IMR-90 (cell line): ENCODE measurements at regions of chr7 and their contacts with region 1.

Region 1: GRCh38 chr7:26192485-26193087 is 8.0 kb downstream of the HNRNPA2B1 start:
- DNase-seq: no peak
- ATAC-seq: no peak
- H3K4me3 ChIP-seq: no peak overlapping the region
- H3K27ac ChIP-seq: no peak overlapping the region
- H3K4me1 ChIP-seq: peaks cover 5% of the 10 kb centered on the region
- H3K27me3 ChIP-seq: no peaks in the 10 kb centered on the region
- CTCF ChIP-seq: no peak
- POLR2A ChIP-seq: no peak
- RAD21 ChIP-seq: no peak

Region 2: GRCh38 chr7:24732646-24733413 is 1459.8 kb before region 1 on chr7:
- CTCF ChIA-PET with region 1: no interaction called
- POLR2A ChIA-PET with region 1: interaction called, 16 read pairs
- dilution Hi-C with region 1: no loop called
- in situ Hi-C with region 1: no loop called
- intact Hi-C with region 1: no loop called
- DNase-seq: peak; percentile 92
- ATAC-seq: peak; percentile 81
- H3K4me3 ChIP-seq: no peak overlapping the region
- H3K27ac ChIP-seq: peak overlapping the region; percentile 54; the same call in 1 of the 2 replicates
- H3K4me1 ChIP-seq: peaks cover 21% of the 10 kb centered on the region
- H3K27me3 ChIP-seq: no peaks in the 10 kb centered on the region
- CTCF ChIP-seq: no peak
- POLR2A ChIP-seq: no peak
- RAD21 ChIP-seq: no peak

Region 3: GRCh38 chr7:26078437-26079336 is 113.9 kb before region 1 on chr7:
- CTCF ChIA-PET with region 1: no interaction called
- POLR2A ChIA-PET with region 1: interaction called, 10 read pairs
- dilution Hi-C with region 1: no loop called
- in situ Hi-C with region 1: no loop called
- intact Hi-C with region 1: no loop called
- DNase-seq: no peak
- ATAC-seq: peak; percentile 51; the same call in 1 of the 2 replicates
- H3K4me3 ChIP-seq: no peak overlapping the region
- H3K27ac ChIP-seq: no peak overlapping the region
- H3K4me1 ChIP-seq: no peaks in the 10 kb centered on the region
- H3K27me3 ChIP-seq: peaks cover 43% of the 10 kb centered on the region
- CTCF ChIP-seq: 0 out of 2 replicates have a peak, but pooled peaks have one; percentile 25
- POLR2A ChIP-seq: no peak
- RAD21 ChIP-seq: no peak

Region 4: GRCh38 chr7:26136831-26137455 is 55.6 kb before region 1 on chr7:
- CTCF ChIA-PET with region 1: no interaction called
- POLR2A ChIA-PET with region 1: no interaction called
- dilution Hi-C with region 1: no loop called
- in situ Hi-C with region 1: no loop called
- intact Hi-C with region 1: no loop called
- DNase-seq: no peak
- ATAC-seq: no peak
- H3K4me3 ChIP-seq: no peak overlapping the region
- H3K27ac ChIP-seq: no peak overlapping the region
- H3K4me1 ChIP-seq: no peaks in the 10 kb centered on the region
- H3K27me3 ChIP-seq: peaks cover 14% of the 10 kb centered on the region
- CTCF ChIP-seq: no peak
- POLR2A ChIP-seq: no peak
- RAD21 ChIP-seq: no peak

Region 5: GRCh38 chr7:27269455-27269854 is 1076.9 kb after region 1 on chr7:
- CTCF ChIA-PET with region 1: no interaction called
- POLR2A ChIA-PET with region 1: no interaction called
- dilution Hi-C with region 1: no loop called
- in situ Hi-C with region 1: no loop called
- intact Hi-C with region 1: no loop called
- DNase-seq: no peak
- ATAC-seq: no peak
- H3K4me3 ChIP-seq: no peak overlapping the region
- H3K27ac ChIP-seq: no peak overlapping the region
- H3K4me1 ChIP-seq: no peaks in the 10 kb centered on the region
- H3K27me3 ChIP-seq: peaks cover 2% of the 10 kb centered on the region; the same call in 1 of the 2 replicates
- CTCF ChIP-seq: no peak
- POLR2A ChIP-seq: no peak
- RAD21 ChIP-seq: no peak